GM12878 (cell line): ENCODE measurements at regions of chr9 and their contacts with region 1.

Region 1: GRCh38 chr9:136225748-136226679 is 19.6 kb downstream of the QSOX2 start:
- DNase-seq: peak; percentile 31
- ATAC-seq: peak; percentile 99
- H3K4me3 ChIP-seq: peak overlapping the region; percentile 42; the same call in 1 of the 2 replicates
- H3K27ac ChIP-seq: peak overlapping the region; percentile 79
- H3K4me1 ChIP-seq: peaks cover 19% of the 10 kb centered on the region
- H3K27me3 ChIP-seq: no peaks in the 10 kb centered on the region
- CTCF ChIP-seq: peak; percentile 90 to 98 (median 98)
- EP300 ChIP-seq: no peak
- POLR2A ChIP-seq: no peak; the same call in 1 of the 2 replicates
- RAD21 ChIP-seq: peak; percentile 48

Region 2: DNA sequence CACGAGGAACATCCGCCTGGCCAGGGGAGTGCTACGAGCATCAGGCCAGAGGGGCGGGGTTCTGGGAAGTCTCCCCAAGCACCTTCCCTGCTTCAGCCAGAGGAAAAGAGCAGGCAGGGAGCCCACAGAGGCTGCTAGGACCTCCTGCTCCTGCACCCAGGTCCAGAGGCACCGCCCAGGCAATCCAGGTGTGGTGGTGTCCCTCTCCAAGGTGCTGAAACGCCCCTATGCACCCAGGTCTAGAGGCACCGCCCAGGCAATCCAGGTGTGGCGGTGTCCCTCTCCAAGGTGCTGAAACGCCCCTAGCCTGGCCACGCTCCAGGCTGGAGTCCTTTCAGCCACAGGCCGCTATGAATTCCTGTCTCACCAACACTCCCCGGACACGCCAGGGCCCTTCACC is 254.1 kb before region 1 on chr9:
- CTCF ChIA-PET with region 1: interaction called, 4 read pairs
- POLR2A ChIA-PET with region 1: no interaction called
- RAD21 ChIA-PET with region 1: no interaction called
- SMC1A ChIA-PET with region 1: no interaction called
- in situ Hi-C with region 1: no loop called
- intact Hi-C with region 1: loop called (anchors 5 kb)
- DNase-seq: no peak
- ATAC-seq: peak; percentile 62
- H3K4me3 ChIP-seq: no peak overlapping the region
- H3K27ac ChIP-seq: no peak overlapping the region
- H3K4me1 ChIP-seq: no peaks in the 10 kb centered on the region
- H3K27me3 ChIP-seq: no peaks in the 10 kb centered on the region
- CTCF ChIP-seq: no peak
- EP300 ChIP-seq: no peak
- POLR2A ChIP-seq: no peak
- RAD21 ChIP-seq: no peak

Region 3: GRCh38 chr9:136244122-136244968 is 18.3 kb after region 1 on chr9:
- CTCF ChIA-PET with region 1: interaction called, 30 read pairs
- POLR2A ChIA-PET with region 1: interaction called, 3 read pairs
- RAD21 ChIA-PET with region 1: interaction called, 3 read pairs
- SMC1A ChIA-PET with region 1: interaction called, 9 read pairs
- in situ Hi-C with region 1: no loop called
- intact Hi-C with region 1: no loop called
- DNase-seq: peak; percentile 76
- ATAC-seq: peak; percentile 73
- H3K4me3 ChIP-seq: peak overlapping the region; percentile 80
- H3K27ac ChIP-seq: peak overlapping the region; percentile 75
- H3K4me1 ChIP-seq: peaks cover 38% of the 10 kb centered on the region
- H3K27me3 ChIP-seq: peaks cover 0 to 1% of the 10 kb centered on the region in 2 experiments; a peak in 2 of 4 replicates
- CTCF ChIP-seq: no peak
- EP300 ChIP-seq: peak in 1 of 2 experiments; percentile 29; a peak in 1 of 4 replicates
- POLR2A ChIP-seq: no peak
- RAD21 ChIP-seq: no peak

Region 4: DNA sequence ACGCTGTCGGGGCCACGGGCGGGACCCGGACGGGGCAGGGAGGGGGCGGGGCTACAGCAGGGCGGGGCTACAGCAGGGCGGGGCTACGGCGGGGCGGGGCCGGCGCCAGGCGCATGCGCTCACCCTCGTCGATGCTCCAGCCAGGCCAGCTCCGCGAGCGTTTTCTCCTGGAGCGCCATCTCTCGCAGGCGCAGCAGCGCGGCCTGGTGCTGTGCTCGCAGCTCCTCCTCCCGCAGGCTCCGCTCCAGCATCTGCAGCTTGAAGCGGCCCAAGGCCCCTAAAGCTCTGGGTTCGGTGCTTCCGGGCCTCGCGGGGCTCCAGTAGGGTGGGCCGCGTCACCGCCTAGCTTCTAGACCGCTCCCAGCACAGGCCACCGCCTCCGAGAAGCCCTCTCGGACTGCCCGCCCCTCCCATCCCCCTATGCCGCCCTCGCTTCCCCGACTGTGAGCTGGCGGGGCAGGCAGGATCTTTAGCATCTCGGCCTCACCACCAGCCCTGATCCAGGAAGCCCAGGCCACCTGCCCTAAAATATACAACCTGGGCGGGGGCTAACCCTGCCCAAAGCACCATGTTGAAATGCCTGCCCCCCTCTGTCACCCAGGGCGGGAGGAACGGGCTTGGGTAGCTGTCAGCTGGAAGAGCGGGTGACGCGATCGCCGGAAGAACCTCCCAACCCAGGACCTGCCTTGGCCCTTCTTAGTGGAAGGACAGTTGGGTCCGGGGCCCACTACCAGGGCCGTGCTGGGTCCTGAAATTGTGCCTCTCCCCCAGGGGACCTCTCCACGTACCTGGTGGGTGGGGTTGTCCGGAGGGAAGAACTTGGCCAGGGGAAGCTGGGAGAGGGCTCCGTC is 41.5 kb after region 1 on chr9:
- CTCF ChIA-PET with region 1: interaction called, 10 read pairs
- POLR2A ChIA-PET with region 1: no interaction called
- RAD21 ChIA-PET with region 1: interaction called, 3 read pairs
- SMC1A ChIA-PET with region 1: no interaction called
- in situ Hi-C with region 1: no loop called
- intact Hi-C with region 1: no loop called
- DNase-seq: no peak
- ATAC-seq: peak; percentile 97
- H3K4me3 ChIP-seq: peak overlapping the region; percentile 83
- H3K27ac ChIP-seq: peak overlapping the region; percentile 30
- H3K4me1 ChIP-seq: no peaks in the 10 kb centered on the region
- H3K27me3 ChIP-seq: no peaks in the 10 kb centered on the region
- CTCF ChIP-seq: peak; percentile 14 to 54 (median 19); a peak in 3 of 6 replicates
- EP300 ChIP-seq: no peak
- POLR2A ChIP-seq: peak; percentile 89
- RAD21 ChIP-seq: peak; percentile 16; the same call in 1 of the 2 replicates